PC-3 (cell line): ENCODE measurements at regions of chr4 and their contacts with region 1.

Region 1: DNA sequence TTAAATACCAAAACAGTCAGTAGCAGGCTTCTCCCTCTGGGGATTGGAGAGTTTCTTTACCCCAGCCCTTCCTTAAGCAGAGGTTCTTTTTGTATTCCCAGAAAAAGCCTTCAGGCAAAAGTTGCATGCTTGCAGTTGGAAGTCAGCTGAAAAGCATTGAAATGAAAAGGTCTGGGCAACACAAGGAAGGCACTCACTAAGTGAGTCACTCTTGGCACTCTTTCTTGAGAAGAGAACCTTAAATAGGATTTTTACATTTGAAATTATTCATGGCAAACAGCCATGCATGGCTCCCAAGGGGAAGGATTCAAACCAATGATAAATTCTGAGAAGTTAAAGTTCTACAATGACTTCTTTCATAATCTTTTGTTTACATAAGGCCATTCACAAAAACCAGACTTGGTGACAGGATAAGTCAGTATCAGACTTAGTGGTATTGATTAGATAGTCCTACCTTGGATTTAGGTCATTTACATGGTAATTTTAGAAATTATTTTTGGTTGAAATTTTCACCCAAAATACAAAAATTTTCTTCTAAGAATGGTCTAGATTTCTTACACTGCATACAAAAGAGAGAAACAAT is 2068.9 kb downstream of the PCDH7 start:
- DNase-seq: peak; percentile 76
- ATAC-seq: peak; percentile 83
- H3K4me3 ChIP-seq: no peak overlapping the region
- H3K27ac ChIP-seq: no peak overlapping the region
- H3K4me1 ChIP-seq: peaks cover 5% of the 10 kb centered on the region; the same call in 1 of the 2 replicates
- H3K27me3 ChIP-seq: no peaks in the 10 kb centered on the region
- CTCF ChIP-seq: no peak

Region 2: GRCh38 chr4:32684160-32684559 is 105.0 kb before region 1 on chr4:
- CTCF ChIA-PET with region 1: no interaction called
- POLR2A ChIA-PET with region 1: no interaction called
- intact Hi-C with region 1: no loop called
- DNase-seq: no peak
- ATAC-seq: no peak
- H3K4me3 ChIP-seq: no peak overlapping the region
- H3K27ac ChIP-seq: no peak overlapping the region
- H3K4me1 ChIP-seq: peaks cover 1% of the 10 kb centered on the region; the same call in 1 of the 2 replicates
- H3K27me3 ChIP-seq: no peaks in the 10 kb centered on the region
- CTCF ChIP-seq: no peak

Region 3: DNA sequence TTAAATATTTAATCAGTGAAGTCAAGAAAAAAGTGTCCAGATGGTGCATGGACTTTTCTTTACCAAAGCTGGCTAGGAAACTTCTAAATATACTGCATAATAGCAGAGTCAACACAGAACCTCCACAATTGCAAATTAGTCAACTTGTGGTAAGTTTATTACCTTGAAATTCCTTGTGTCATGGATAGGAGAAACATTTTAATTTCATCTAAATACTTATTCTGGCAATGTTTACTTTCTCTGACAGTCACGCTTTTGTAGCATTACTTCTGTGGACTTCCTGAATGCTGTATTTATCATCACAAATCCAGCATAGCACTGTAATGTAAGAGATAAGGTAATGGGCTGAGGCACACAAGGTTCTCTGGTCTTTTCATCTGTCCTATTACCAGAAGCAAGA is 197.1 kb after region 1 on chr4:
- CTCF ChIA-PET with region 1: no interaction called
- POLR2A ChIA-PET with region 1: no interaction called
- intact Hi-C with region 1: loop called (anchors 1 kb)
- DNase-seq: peak; percentile 69
- ATAC-seq: peak; percentile 86
- H3K4me3 ChIP-seq: no peak overlapping the region
- H3K27ac ChIP-seq: peak overlapping the region; percentile 29; the same call in 1 of the 2 replicates
- H3K4me1 ChIP-seq: peaks cover 21% of the 10 kb centered on the region
- H3K27me3 ChIP-seq: no peaks in the 10 kb centered on the region
- CTCF ChIP-seq: no peak

Region 4: DNA sequence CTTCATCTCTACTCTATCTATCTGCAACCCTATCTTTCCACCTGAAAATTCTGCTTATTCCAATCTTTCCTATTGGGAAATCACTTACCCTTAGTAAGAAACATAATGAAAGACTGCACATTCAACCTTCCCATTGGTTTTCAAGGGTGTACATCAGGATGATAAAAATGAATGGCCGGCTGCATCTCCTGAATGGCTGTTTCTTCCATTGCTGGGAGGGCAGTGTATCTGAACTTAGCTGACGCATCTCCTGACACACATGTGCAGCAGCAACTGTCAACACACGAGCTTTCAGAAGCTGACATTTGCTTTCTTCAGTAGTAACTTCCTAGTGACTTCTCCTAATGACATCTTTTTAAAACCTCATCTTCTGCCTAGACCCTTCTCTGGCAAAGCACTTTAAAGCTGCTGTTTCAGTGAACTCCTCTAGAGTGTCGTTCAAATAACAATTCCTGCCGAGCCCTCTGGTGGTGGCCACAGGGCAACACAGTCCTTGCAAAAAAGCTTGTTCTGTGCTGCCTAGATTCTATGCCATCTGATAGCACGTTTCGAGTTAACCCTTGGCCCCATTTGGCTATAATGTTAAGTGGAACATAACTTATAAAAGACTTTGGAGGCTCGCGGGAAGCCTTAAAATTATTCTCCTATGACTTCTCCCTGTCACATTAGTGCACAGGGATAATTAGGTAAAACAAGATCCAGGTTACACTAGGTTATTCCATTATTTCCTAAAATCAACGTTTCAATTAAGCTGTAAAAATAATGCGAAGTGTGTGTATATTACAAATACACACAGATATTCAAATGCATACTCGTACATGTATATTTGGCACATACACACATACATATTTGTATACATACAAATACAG is 271.8 kb after region 1 on chr4:
- CTCF ChIA-PET with region 1: no interaction called
- POLR2A ChIA-PET with region 1: no interaction called
- intact Hi-C with region 1: loop called (anchors 5 kb)
- DNase-seq: peak; percentile 69
- ATAC-seq: peak; percentile 88
- H3K4me3 ChIP-seq: no peak overlapping the region
- H3K27ac ChIP-seq: no peak overlapping the region
- H3K4me1 ChIP-seq: no peaks in the 10 kb centered on the region
- H3K27me3 ChIP-seq: no peaks in the 10 kb centered on the region
- CTCF ChIP-seq: peak; percentile 77